AG04449 (cell line): ENCODE measurements at regions of chr22 and their contacts with region 1.

Region 1: DNA sequence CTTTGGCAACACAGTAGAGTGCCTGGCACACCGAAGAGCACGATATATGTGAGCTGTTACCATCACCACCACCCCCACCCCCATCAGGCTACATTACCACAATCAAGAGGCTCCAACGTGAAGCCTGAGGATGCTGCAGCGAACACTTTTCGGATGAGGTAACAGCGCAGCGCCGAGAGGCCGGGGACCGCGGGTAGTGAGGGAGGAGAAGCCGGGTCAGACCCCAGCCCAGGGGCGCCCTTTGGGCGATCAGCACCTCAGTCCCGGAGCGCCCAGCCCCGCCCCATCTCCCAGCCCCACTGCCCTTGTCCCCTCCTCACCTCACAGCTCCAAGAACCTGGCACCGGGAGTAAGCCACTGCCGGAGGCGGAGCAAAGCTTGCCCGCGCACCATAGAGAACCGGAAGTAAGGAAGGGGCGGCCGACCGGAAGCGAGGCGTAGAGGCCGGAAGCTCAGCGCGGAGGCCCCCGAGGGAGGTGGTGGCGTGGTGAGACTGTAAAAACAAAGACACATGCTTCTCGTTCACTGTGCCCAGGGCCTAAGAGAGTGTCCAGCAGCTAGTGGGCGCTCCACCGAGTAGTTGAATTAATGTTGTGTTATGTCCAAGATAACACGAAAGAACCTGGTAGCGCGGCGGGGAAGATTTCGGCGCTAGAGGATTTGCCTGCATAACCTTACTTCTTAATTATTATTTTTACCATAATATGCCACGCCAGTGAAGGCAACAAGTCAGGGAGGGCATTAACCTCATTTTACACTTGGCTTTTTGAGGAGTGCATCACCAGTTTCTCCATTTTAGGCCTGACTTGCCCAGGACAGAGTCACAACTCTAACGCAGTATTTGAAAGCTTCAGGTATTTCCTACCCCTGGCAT is at the start of gene THOC5:
- DNase-seq: peak; percentile 63
- H3K4me3 ChIP-seq: peak within 1 kb of the TSS; percentile 79
- CTCF ChIP-seq: peak; percentile 77

Region 2: GRCh38 chr22:29541845-29542244 is 11.7 kb before region 1 on chr22:
- CTCF ChIA-PET with region 1: interaction called, 29 read pairs
- POLR2A ChIA-PET with region 1: no interaction called
- DNase-seq: no peak
- H3K4me3 ChIP-seq: no peak overlapping the region
- CTCF ChIP-seq: no peak

Region 3: GRCh38 chr22:29563652-29564460 is 10.3 kb after region 1 on chr22:
- CTCF ChIA-PET with region 1: interaction called, 11 read pairs
- POLR2A ChIA-PET with region 1: no interaction called
- DNase-seq: no peak
- H3K4me3 ChIP-seq: no peak overlapping the region
- CTCF ChIP-seq: no peak

Region 4: DNA sequence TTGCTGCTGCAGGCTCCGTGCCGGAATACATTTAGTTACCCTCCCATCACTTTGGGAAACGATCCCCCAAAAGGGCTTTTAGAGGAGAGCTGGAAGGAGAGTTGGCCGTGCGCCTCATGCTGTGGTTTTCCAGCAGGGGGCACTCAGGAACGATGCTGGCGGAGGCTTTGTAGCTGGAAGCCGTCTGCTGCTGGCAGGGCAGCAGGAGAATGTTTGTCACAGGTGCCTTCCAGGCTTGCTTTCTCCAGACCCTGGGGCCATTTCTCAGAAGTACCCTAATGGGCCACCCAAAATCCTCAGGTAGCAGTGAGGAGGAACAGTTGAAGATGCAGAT is 136.3 kb after region 1 on chr22:
- CTCF ChIA-PET with region 1: no interaction called
- POLR2A ChIA-PET with region 1: no interaction called
- DNase-seq: no peak
- H3K4me3 ChIP-seq: no peak overlapping the region
- CTCF ChIP-seq: peak; percentile 85